H1 (cell line): ENCODE measurements at regions of chr4 and their contacts with region 1.

Region 1: DNA sequence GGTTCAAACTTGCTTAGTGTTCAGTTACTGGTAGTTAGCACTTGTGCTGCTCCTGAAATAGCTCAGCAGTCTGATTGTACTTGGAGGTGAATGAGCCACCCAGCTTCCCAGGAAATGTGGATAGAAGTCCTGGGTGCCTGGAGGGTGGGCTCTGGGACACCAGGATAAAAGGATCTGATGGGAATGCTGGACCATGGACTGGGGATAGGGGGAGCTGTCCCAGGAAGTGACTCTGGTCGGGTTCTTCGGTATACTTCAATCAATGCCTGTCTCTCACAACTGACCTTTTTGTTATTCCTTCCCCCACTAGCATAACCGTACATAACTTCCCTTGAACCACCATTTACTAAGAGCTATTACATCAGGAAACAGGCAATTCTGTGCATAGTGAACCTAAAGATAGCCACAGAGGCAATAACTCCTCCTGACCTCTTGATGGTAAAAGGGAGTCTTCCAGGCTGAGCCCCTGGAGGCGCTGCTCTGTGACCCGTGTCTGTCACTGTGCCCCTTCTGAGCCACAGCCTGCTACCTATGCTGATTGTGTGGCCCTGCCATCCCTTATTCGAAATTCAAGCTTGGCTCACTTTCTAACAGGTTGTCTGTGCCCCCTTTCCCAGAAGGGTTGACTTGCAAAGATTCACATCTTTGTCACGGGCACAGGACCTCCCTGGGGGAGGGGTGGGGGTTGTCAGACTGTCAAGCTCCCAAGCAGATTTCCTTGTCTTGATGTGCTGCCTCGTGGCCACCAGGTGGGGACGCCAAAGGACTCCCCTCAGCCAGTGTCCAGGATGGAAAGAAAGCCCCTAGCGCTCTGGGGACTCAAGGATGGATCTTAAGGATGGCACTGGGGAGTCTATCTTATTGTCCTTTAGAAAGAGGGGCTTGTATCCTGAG is 24.5 kb upstream of the WDR1 start:
- DNase-seq: peak in 1 of 2 experiments; percentile 68
- H3K4me3 ChIP-seq: peak overlapping the region in 1 of 4 experiments; percentile 23; a peak in 1 of 8 replicates
- H3K27ac ChIP-seq: no peak overlapping the region
- H3K4me1 ChIP-seq: no peaks in the 10 kb centered on the region
- H3K27me3 ChIP-seq: peaks cover 0 to 8% (median 0%) of the 10 kb centered on the region in 4 experiments; a peak in 2 of 7 replicates
- CTCF ChIP-seq: peak; percentile 72 to 81 (median 79)
- EP300 ChIP-seq: no peak
- POLR2A ChIP-seq: no peak
- RAD21 ChIP-seq: peak; percentile 74

Region 2: GRCh38 chr4:9999956-10000551 is 141.1 kb before region 1 on chr4:
- CTCF ChIA-PET with region 1: no interaction called
- POLR2A ChIA-PET with region 1: no interaction called
- DNase-seq: no peak
- H3K4me3 ChIP-seq: no peak overlapping the region
- H3K27ac ChIP-seq: no peak overlapping the region
- H3K4me1 ChIP-seq: no peaks in the 10 kb centered on the region; a peak in 1 of 7 replicates
- H3K27me3 ChIP-seq: no peaks in the 10 kb centered on the region; a peak in 1 of 7 replicates
- CTCF ChIP-seq: no peak
- EP300 ChIP-seq: no peak
- POLR2A ChIP-seq: no peak
- RAD21 ChIP-seq: no peak

Region 3: DNA sequence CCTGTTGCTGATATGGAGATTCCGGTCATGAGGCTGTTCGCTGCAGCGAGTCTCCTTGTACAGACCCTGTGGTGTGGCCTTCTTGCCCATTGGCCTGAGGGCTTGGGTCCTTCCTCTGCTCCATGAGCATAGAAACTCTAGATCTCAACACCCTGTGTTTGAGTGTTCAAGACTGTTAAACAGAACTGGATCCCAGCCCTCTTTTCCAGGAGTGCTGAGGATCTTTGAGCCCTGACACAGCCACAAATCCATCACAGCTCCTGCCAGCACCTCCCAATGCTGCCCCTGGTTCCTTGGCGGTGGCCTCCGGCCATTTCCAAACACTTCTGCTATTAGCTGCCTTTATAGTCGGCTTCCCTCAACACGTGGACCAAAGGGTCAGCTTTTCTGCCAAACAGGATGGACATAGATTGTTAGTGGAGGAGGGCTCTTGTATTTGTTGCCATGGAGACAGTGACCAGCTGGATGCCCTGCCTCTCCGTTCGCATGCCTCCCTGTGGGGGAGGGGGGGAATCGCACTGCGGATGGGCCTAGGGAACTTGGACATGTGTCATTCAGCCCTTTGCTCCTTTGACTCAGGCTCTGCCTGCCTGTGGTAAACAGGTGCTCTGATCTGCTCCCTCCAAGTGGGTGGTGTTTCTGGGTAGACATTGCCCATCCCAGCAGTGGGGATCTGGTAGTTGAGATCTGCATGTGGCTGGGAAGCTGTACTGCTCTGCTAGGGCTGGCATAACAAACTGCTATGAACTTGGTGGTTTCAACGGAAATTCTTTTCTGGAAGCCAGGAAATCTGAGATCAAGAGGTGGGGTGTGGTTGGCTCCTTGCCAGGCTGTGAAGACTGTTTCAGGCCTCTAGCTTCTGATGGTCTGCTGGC is 17.6 kb before region 1 on chr4:
- CTCF ChIA-PET with region 1: interaction called, 22 read pairs
- POLR2A ChIA-PET with region 1: interaction called, 24 read pairs
- DNase-seq: peak in 1 of 2 experiments; percentile 56
- H3K4me3 ChIP-seq: no peak overlapping the region
- H3K27ac ChIP-seq: peak overlapping the region; percentile 10; the same call in 1 of the 2 replicates
- H3K4me1 ChIP-seq: peaks cover 2 to 11% (median 6%) of the 10 kb centered on the region in 4 experiments
- H3K27me3 ChIP-seq: no peaks in the 10 kb centered on the region
- CTCF ChIP-seq: no peak
- EP300 ChIP-seq: no peak
- POLR2A ChIP-seq: no peak
- RAD21 ChIP-seq: 0 out of 4 replicates have a peak, but pooled peaks of 1 of the 2 experiments have one; percentile 6

Region 4: GRCh38 chr4:10129196-10130177 is 11.6 kb before region 1 on chr4:
- CTCF ChIA-PET with region 1: interaction called, 21 read pairs
- POLR2A ChIA-PET with region 1: interaction called, 3 read pairs
- DNase-seq: no peak
- H3K4me3 ChIP-seq: no peak overlapping the region
- H3K27ac ChIP-seq: no peak overlapping the region
- H3K4me1 ChIP-seq: no peaks in the 10 kb centered on the region; a peak in 1 of 7 replicates
- H3K27me3 ChIP-seq: no peaks in the 10 kb centered on the region
- CTCF ChIP-seq: no peak
- EP300 ChIP-seq: no peak
- POLR2A ChIP-seq: no peak
- RAD21 ChIP-seq: no peak

Region 5: DNA sequence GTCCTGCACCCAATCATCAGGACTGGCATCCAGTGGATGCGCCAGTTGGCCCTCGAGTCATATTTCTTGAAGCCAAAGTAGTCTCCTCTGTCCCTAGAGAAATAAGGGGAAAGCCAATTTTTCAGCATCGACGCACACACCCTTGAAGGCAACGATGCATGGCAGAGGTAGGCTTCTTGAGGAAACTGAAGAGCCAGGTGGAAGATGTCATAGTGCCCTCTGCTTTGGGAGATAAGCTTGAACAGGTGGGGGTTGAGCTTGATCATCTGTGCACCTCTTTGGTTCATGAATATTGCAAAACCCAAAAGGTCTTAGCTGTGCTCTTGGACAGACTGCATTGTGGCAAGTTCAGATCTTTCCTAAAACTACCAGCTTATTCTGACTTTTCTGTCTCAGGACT is 10.1 kb after region 1 on chr4:
- CTCF ChIA-PET with region 1: interaction called, 33 read pairs
- POLR2A ChIA-PET with region 1: no interaction called
- DNase-seq: no peak
- H3K4me3 ChIP-seq: no peak overlapping the region
- H3K27ac ChIP-seq: no peak overlapping the region
- H3K4me1 ChIP-seq: no peaks in the 10 kb centered on the region
- H3K27me3 ChIP-seq: no peaks in the 10 kb centered on the region; a peak in 1 of 7 replicates
- CTCF ChIP-seq: no peak
- EP300 ChIP-seq: no peak
- POLR2A ChIP-seq: no peak
- RAD21 ChIP-seq: no peak

Region 6: DNA sequence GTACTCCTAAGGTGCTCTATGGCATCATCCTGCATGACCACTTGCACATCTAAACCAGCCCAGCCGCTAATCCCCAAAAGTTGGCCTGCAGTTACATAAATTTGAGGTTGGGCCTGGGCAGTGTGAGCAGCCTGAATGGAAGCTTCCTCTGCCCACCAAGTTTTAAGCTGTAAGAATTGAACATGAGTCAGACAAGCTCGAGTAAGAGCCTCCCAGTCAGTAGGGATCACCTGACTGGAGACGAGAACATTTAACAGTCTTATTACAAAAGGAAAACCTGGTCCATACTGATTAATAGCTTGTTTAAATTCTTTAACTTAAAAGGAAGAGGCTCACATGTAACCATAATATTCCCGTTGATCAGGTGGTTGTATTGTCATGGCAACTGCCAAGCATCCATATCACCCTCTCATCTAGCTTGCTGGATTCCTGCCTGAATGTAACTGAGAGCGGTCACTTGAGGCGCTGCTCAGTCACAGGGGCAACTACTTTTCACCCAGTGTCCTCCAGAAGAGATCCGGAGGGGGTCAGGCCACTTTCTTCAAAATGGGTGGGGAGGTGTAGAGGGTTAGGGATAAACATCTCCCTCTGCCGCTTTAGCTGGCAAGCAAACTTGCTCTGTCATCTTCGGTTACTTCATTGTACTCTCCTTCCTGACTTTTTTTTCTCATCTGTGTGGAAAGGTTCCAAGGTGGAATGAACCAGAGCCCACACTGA is 32.1 kb after region 1 on chr4:
- CTCF ChIA-PET with region 1: interaction called, 20 read pairs
- POLR2A ChIA-PET with region 1: no interaction called
- DNase-seq: no peak
- H3K4me3 ChIP-seq: no peak overlapping the region
- H3K27ac ChIP-seq: no peak overlapping the region
- H3K4me1 ChIP-seq: no peaks in the 10 kb centered on the region; a peak in 2 of 7 replicates
- H3K27me3 ChIP-seq: no peaks in the 10 kb centered on the region
- CTCF ChIP-seq: peak in 1 of 3 experiments; percentile 16; a peak in 1 of 4 replicates
- EP300 ChIP-seq: no peak
- POLR2A ChIP-seq: no peak
- RAD21 ChIP-seq: 0 out of 4 replicates have a peak, but pooled peaks of 1 of the 2 experiments have one; percentile 9

Region 7: DNA sequence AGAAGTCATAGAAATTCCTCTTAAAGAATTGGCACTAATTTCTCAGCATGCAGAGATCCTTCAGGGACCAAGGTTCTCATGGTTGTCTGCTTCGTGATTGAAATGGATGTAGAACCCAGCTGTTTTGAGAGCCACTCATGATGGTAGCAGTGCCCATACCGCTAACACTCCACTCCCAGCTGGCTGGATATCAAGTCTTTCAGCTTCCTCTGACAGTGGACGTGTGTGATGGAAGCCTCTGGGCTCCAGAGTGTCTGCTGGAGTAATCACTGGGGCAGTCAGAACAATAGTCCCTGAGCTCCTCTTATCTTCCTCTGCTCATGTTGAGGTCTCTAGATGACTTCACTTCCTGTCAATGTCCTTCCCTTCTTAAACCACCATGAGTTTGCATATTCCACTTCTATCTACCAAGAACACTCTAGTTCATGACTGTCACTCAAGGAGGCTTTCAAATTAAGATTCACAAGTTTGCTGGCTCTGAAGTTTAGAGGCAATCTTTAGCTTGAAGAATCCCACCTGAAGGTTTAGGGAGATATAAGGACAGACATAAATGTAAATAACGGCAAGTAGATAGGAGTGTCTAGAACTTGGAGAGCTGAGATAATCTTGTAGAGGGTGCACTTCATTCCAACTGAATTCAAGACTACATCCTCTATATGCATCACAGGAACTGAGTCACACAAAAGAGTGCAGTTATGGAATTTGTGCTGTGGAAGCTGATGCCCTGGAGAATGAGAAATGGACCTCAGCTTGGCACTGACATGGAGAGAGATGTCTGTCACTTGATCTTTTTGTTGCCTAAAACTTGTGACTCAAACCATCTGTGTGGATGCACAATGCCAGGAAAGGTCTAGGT is 40.0 kb after region 1 on chr4:
- CTCF ChIA-PET with region 1: interaction called, 12 read pairs
- POLR2A ChIA-PET with region 1: no interaction called
- DNase-seq: no peak
- H3K4me3 ChIP-seq: no peak overlapping the region
- H3K27ac ChIP-seq: no peak overlapping the region
- H3K4me1 ChIP-seq: no peaks in the 10 kb centered on the region
- H3K27me3 ChIP-seq: no peaks in the 10 kb centered on the region
- CTCF ChIP-seq: no peak
- EP300 ChIP-seq: no peak
- POLR2A ChIP-seq: no peak
- RAD21 ChIP-seq: no peak